ENCODE measurements at regions of chr19 and their contacts with region 1.

Region 1: GRCh38 chr19:12806239-12807081 is at the start of gene RNASEH2A:
- DNase-seq: no peak
- H3K4me3 ChIP-seq: peak within 1 kb of the TSS; percentile 48 to 82 (median 70)
- H3K27ac ChIP-seq: peak within 1 kb of the TSS; percentile 73 to 82 (median 79)
- H3K4me1 ChIP-seq: peaks cover 15 to 31% (median 23%) of the 10 kb centered on the region in 3 donors
- H3K27me3 ChIP-seq: no peaks in the 10 kb centered on the region
- CTCF ChIP-seq: peak in 1 of 6 experiments; percentile 36
- POLR2A ChIP-seq: peak in 1 of 4 donors; percentile 26
- total RNA-seq, gene RNASEH2A: 7.1 to 19.2 (median 14.9) TPM

Region 2: DNA sequence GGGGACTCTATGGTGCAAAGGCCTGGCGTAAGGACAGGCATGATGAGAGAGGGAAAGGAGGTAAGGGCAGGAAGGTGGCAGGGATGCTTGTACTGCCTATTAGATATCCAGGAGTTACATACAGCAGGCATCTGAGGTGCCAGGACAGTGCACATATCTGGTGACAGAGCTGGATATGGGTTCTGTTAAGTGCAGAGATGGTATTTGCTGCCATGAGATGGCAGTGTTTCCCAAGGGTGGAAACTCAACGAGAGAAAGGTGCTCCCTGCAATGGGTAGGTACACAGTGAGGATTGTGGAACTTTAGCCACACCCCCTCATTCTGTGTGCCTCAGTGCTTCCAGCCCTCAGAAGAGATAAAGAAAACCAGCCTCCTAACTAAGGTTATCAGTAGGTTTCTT is 89.6 kb before region 1 on chr19:
- intact Hi-C with region 1: loop called (anchors 10 kb)
- DNase-seq: no peak
- H3K4me3 ChIP-seq: no peak overlapping the region
- H3K27ac ChIP-seq: no peak overlapping the region
- H3K4me1 ChIP-seq: peaks cover 7 to 52% (median 11%) of the 10 kb centered on the region in 3 donors
- H3K27me3 ChIP-seq: no peaks in the 10 kb centered on the region
- CTCF ChIP-seq: peak in 4 of 6 experiments; percentile 33 to 62 (median 36)
- POLR2A ChIP-seq: no peak

Region 3: GRCh38 chr19:12745166-12745897 is 61.1 kb before region 1 on chr19:
- intact Hi-C with region 1: no loop called
- DNase-seq: no peak
- H3K4me3 ChIP-seq: no peak overlapping the region
- H3K27ac ChIP-seq: no peak overlapping the region
- H3K4me1 ChIP-seq: peaks cover 15 to 32% (median 16%) of the 10 kb centered on the region in 3 donors
- H3K27me3 ChIP-seq: peaks cover 0 to 6% (median 0%) of the 10 kb centered on the region in 4 donors
- CTCF ChIP-seq: no peak
- POLR2A ChIP-seq: no peak

Region 4: GRCh38 chr19:12766051-12766521 is 40.4 kb before region 1 on chr19:
- intact Hi-C with region 1: loop called (anchors 5 kb)
- DNase-seq: no peak
- H3K4me3 ChIP-seq: peak overlapping the region; percentile 18 to 69 (median 43)
- H3K27ac ChIP-seq: peak overlapping the region in 3 of 4 donors; percentile 59 to 80 (median 72)
- H3K4me1 ChIP-seq: peaks cover 0 to 7% (median 6%) of the 10 kb centered on the region in 3 donors
- H3K27me3 ChIP-seq: no peaks in the 10 kb centered on the region
- CTCF ChIP-seq: peak; percentile 75 to 98 (median 92)
- POLR2A ChIP-seq: no peak

Region 5: GRCh38 chr19:12881172-12881808 is 74.8 kb after region 1 on chr19 and contains the start of gene DNASE2:
- intact Hi-C with region 1: no loop called
- DNase-seq: peak; percentile 86
- H3K4me3 ChIP-seq: peak within 1 kb of the TSS; percentile 52 to 98 (median 82)
- H3K27ac ChIP-seq: peak within 1 kb of the TSS; percentile 84 to 96 (median 94)
- H3K4me1 ChIP-seq: peaks cover 14 to 44% (median 20%) of the 10 kb centered on the region in 3 donors
- H3K27me3 ChIP-seq: peaks cover 0 to 26% (median 0%) of the 10 kb centered on the region in 4 donors
- CTCF ChIP-seq: peak in 1 of 6 experiments; percentile 9
- POLR2A ChIP-seq: peak in 3 of 4 donors; percentile 61 to 93 (median 83)
- total RNA-seq, gene DNASE2: 12.3 to 27.9 (median 20.4) TPM

Region 6: DNA sequence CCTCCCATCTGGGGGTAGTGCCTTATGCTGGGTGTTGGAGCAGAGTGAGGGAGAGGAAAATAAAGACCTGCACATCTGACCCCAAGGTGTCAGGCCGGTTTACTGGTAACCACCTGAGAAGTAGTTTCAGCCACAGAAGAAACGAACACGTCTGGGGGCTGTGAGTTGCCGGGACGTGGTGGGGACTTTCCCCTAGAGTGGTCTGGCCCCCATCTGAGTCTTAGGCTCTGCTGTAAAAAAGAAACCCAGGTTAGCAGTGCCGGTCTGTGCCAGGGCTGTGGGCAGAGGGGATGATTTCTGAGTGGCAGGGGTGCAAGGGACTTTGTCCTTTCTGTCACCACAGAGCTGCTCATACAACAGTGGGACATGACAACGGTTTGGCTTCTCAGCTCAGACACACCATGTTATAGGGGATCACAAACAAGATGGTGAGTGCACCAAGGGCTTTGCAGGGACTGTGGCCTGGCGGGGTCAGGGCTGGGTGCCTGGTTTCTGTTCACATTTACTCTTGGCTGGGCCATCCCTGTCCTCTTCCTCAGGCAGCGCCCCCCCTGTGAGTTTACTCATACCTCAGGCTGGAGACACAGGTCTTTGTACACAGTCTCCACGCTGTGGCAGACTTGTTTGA is 93.5 kb after region 1 on chr19:
- intact Hi-C with region 1: no loop called
- DNase-seq: no peak
- H3K4me3 ChIP-seq: no peak overlapping the region
- H3K27ac ChIP-seq: no peak overlapping the region
- H3K4me1 ChIP-seq: no peaks in the 10 kb centered on the region
- H3K27me3 ChIP-seq: no peaks in the 10 kb centered on the region
- CTCF ChIP-seq: no peak
- POLR2A ChIP-seq: no peak

Measured in esophagus squamous epithelium (tissue), 5 donors.